ENCODE measurements at regions of chr11 and their contacts with region 1.

Region 1: GRCh38 chr11:6298605-6299004 is 21.7 kb downstream of the CAVIN3 start:
- DNase-seq: no peak
- H3K4me3 Mint-ChIP-seq: no peak overlapping the region
- H3K27ac Mint-ChIP-seq: no peak overlapping the region
- H3K4me1 Mint-ChIP-seq: no peaks in the 10 kb centered on the region
- H3K27me3 Mint-ChIP-seq: peaks cover 5% of the 10 kb centered on the region

Region 2: GRCh38 chr11:6315811-6316425 is 17.3 kb after region 1 on chr11:
- intact Hi-C with region 1: no loop called
- DNase-seq: peak; percentile 16
- H3K4me3 Mint-ChIP-seq: no peak overlapping the region
- H3K27ac Mint-ChIP-seq: no peak overlapping the region
- H3K4me1 Mint-ChIP-seq: peaks cover 18% of the 10 kb centered on the region
- H3K27me3 Mint-ChIP-seq: peaks cover 20% of the 10 kb centered on the region

Region 3: GRCh38 chr11:6362873-6363678 is 64.5 kb after region 1 on chr11:
- intact Hi-C with region 1: loop called (anchors 2 kb)
- DNase-seq: peak; percentile 59
- H3K4me3 Mint-ChIP-seq: no peak overlapping the region
- H3K27ac Mint-ChIP-seq: no peak overlapping the region
- H3K4me1 Mint-ChIP-seq: peaks cover 3% of the 10 kb centered on the region
- H3K27me3 Mint-ChIP-seq: no peaks in the 10 kb centered on the region